Mammary epithelial cell (primary cell): ENCODE measurements at regions of chr4 and their contacts with region 1.

Region 1: DNA sequence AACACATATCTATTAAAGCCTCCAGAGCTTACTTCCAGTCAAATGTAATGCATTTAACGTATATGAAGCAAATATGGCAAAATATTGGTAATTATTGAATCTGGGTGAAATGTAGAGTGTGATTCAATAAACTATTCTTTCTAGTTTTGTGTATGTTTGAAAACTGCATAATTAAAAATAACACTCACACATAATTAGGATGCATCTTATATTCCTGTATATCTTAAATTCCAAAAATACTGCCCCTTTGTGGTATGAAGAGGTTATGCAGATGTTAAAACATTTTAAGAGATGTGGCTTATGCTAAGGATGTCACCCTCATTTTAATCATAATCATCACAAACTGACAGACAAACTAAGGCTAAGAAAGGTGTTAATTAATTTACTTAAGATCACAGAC is 182.9 kb downstream of the COX18 start:
- DNase-seq: no peak
- H3K4me3 ChIP-seq: no peak overlapping the region
- H3K27ac ChIP-seq: no peak overlapping the region
- H3K4me1 ChIP-seq: no peaks in the 10 kb centered on the region
- H3K27me3 ChIP-seq: no peaks in the 10 kb centered on the region
- CTCF ChIP-seq: peak; percentile 44 to 51

Region 2: DNA sequence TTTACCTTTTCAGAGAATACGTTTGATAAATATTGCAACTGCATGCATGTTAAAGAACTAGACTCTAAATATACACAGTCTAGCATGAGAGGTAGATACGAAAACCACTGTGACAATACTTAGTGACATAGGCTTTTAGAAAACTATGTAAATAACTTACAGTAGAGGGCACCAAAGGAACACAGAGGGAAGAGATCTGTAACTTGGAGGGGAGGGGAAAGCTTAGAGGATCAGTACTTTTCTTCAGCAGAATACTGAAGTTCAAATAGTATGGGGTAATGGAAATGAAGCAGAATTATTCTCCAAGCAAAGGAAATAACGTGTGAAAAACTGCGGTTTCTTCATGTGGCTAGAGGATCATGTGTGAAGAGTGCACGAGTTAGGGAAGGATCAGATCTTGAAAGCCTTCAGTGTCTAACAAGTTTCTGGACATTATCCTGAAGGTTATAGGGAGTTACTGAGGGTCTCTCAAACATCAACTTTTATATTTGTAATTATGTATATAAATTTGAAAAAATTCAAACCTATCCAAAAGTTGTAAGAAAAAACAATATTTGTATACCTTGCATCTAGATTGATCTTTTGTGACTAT is 590.5 kb before region 1 on chr4:
- CTCF ChIA-PET with region 1: no interaction called
- dilution Hi-C with region 1: no loop called
- in situ Hi-C with region 1: no loop called
- intact Hi-C with region 1: loop called (anchors 10 kb)
- DNase-seq: peak; percentile 34
- H3K4me3 ChIP-seq: no peak overlapping the region
- H3K27ac ChIP-seq: no peak overlapping the region
- H3K4me1 ChIP-seq: no peaks in the 10 kb centered on the region
- H3K27me3 ChIP-seq: no peaks in the 10 kb centered on the region
- CTCF ChIP-seq: peak; percentile 54 to 79

Region 3: GRCh38 chr4:72505314-72505744 is 381.3 kb before region 1 on chr4:
- CTCF ChIA-PET with region 1: no interaction called
- dilution Hi-C with region 1: no loop called
- in situ Hi-C with region 1: loop called (anchors 10 to 25 kb)
- intact Hi-C with region 1: loop called (anchors 1 kb)
- DNase-seq: peak; percentile 25
- H3K4me3 ChIP-seq: no peak overlapping the region
- H3K27ac ChIP-seq: no peak overlapping the region
- H3K4me1 ChIP-seq: no peaks in the 10 kb centered on the region
- H3K27me3 ChIP-seq: peaks cover 2% of the 10 kb centered on the region
- CTCF ChIP-seq: peak; percentile 55 to 86

Region 4: DNA sequence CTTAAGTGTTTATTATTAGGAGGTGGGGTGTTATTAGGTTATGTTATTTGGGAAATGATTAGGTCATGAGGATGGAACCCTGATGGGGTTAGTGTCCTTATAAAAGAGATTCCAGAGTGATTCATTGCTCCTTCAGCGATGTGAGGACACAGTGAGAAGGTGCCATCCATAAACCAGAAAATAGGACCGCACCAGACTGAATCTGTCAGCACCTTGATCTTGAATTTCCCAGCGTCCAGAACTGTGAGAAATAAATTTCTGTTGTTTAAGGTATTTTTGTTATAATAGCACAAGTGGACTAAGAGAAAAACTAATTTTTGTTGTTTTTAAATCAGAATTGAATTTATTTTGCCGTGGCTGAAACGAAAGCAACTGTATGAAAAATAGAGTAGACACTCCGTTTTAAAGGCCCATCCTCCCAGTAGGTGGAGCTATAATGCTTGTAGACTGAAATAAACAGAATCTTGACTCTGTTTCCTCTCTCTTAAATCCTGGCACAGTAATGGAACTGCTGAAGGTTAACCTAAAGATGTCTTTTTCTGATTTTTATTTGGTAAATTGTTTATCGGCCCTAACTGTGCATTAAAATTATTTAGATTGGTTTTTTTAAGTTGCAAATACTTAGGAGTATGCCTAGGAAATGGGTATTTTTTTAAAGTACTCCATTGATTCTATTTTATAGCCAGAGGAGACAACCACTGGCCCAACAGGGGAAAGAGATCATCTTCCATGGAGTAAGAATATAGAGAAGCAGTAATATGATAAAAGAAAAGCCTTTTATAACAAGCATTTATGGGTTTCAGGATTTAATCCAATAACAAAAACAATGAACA is 184.4 kb before region 1 on chr4:
- CTCF ChIA-PET with region 1: no interaction called
- dilution Hi-C with region 1: no loop called
- in situ Hi-C with region 1: no loop called
- intact Hi-C with region 1: loop called (anchors 2 kb)
- DNase-seq: peak; percentile 40
- H3K4me3 ChIP-seq: peak overlapping the region; percentile 39 to 75 (median 57)
- H3K27ac ChIP-seq: no peak overlapping the region
- H3K4me1 ChIP-seq: no peaks in the 10 kb centered on the region
- H3K27me3 ChIP-seq: no peaks in the 10 kb centered on the region
- CTCF ChIP-seq: peak; percentile 68

Region 5: DNA sequence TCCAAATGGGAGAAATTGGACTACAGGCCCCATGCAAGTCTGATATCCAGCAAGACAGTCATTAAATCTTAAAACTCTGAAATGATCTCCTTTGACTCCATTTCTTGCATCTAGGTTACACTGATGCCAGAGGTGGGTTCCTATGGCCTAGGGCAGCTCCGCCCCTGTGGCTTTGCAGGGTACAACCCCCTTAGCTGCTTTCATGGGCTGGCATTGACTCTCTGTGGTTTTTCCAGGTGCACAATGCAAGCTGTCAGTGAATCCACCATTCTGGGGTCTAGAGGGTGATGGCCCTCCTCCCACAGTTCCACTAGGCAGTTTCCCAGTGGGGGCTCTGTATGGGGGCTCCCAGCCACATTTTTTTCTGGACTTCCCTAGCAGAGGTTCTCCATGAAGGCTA is 89.1 kb before region 1 on chr4:
- CTCF ChIA-PET with region 1: no interaction called
- dilution Hi-C with region 1: no loop called
- in situ Hi-C with region 1: no loop called
- intact Hi-C with region 1: no loop called
- DNase-seq: no peak
- H3K4me3 ChIP-seq: no peak overlapping the region
- H3K27ac ChIP-seq: no peak overlapping the region
- H3K4me1 ChIP-seq: no peaks in the 10 kb centered on the region
- H3K27me3 ChIP-seq: peaks cover 2% of the 10 kb centered on the region
- CTCF ChIP-seq: no peak

Region 6: GRCh38 chr4:72842323-72842722 is 44.3 kb before region 1 on chr4:
- CTCF ChIA-PET with region 1: no interaction called
- dilution Hi-C with region 1: no loop called
- in situ Hi-C with region 1: no loop called
- intact Hi-C with region 1: no loop called
- DNase-seq: peak; percentile 6
- H3K4me3 ChIP-seq: no peak overlapping the region
- H3K27ac ChIP-seq: no peak overlapping the region
- H3K4me1 ChIP-seq: no peaks in the 10 kb centered on the region
- H3K27me3 ChIP-seq: no peaks in the 10 kb centered on the region
- CTCF ChIP-seq: no peak

Region 7: GRCh38 chr4:72900952-72901351 is 14.3 kb after region 1 on chr4:
- CTCF ChIA-PET with region 1: no interaction called
- dilution Hi-C with region 1: no loop called
- in situ Hi-C with region 1: no loop called
- intact Hi-C with region 1: no loop called
- DNase-seq: no peak
- H3K4me3 ChIP-seq: no peak overlapping the region
- H3K27ac ChIP-seq: no peak overlapping the region
- H3K4me1 ChIP-seq: no peaks in the 10 kb centered on the region
- H3K27me3 ChIP-seq: no peaks in the 10 kb centered on the region
- CTCF ChIP-seq: no peak